B cell (primary cell): ENCODE measurements at regions of chr15 and their contacts with region 1.

Region 1: GRCh38 chr15:67839929-67840748 is at the start of gene RNU6-1:
- DNase-seq: peak; percentile 97
- ATAC-seq: peak; percentile 84
- H3K4me3 ChIP-seq: peak within 1 kb of the TSS; percentile 68 to 97 (median 83)
- H3K4me3 Mint-ChIP-seq: peak within 1 kb of the TSS; percentile 91
- H3K27ac ChIP-seq: peak within 1 kb of the TSS; percentile 95 to 96
- H3K27ac Mint-ChIP-seq: peak within 1 kb of the TSS; percentile 97
- H3K4me1 ChIP-seq: peaks cover 29 to 36% of the 10 kb centered on the region in 2 donors
- H3K4me1 Mint-ChIP-seq: peaks cover 41% of the 10 kb centered on the region
- H3K27me3 ChIP-seq: peaks cover 0 to 30% (median 12%) of the 10 kb centered on the region in 4 experiments
- H3K27me3 Mint-ChIP-seq: peaks cover 15% of the 10 kb centered on the region
- CTCF ChIP-seq: no peak
- total RNA-seq, gene RNU6-1: not detected in 2 replicates

Region 2: GRCh38 chr15:66862878-66863335 is 977.2 kb before region 1 on chr15:
- CTCF ChIA-PET with region 1: no interaction called
- POLR2A ChIA-PET with region 1: no interaction called
- intact Hi-C with region 1: loop called (anchors 5 kb)
- DNase-seq: peak; percentile 91
- ATAC-seq: peak; percentile 61
- H3K4me3 ChIP-seq: no peak overlapping the region
- H3K4me3 Mint-ChIP-seq: no peak overlapping the region
- H3K27ac ChIP-seq: peak overlapping the region; percentile 51 to 61
- H3K27ac Mint-ChIP-seq: peak overlapping the region; percentile 63
- H3K4me1 ChIP-seq: peaks cover 33 to 47% of the 10 kb centered on the region in 2 donors
- H3K4me1 Mint-ChIP-seq: peaks cover 49% of the 10 kb centered on the region
- H3K27me3 ChIP-seq: peaks cover 0 to 3% (median 0%) of the 10 kb centered on the region in 4 experiments
- H3K27me3 Mint-ChIP-seq: no peaks in the 10 kb centered on the region
- CTCF ChIP-seq: peak; percentile 89

Region 3: GRCh38 chr15:67501177-67501835 is 338.8 kb before region 1 on chr15:
- CTCF ChIA-PET with region 1: interaction called, 12 read pairs
- POLR2A ChIA-PET with region 1: no interaction called
- intact Hi-C with region 1: loop called (anchors 5 kb)
- DNase-seq: peak; percentile 36
- ATAC-seq: peak; percentile 41
- H3K4me3 ChIP-seq: no peak overlapping the region
- H3K4me3 Mint-ChIP-seq: no peak overlapping the region
- H3K27ac ChIP-seq: no peak overlapping the region
- H3K27ac Mint-ChIP-seq: no peak overlapping the region
- H3K4me1 ChIP-seq: peaks cover 5 to 9% of the 10 kb centered on the region in 2 donors
- H3K4me1 Mint-ChIP-seq: peaks cover 14% of the 10 kb centered on the region
- H3K27me3 ChIP-seq: no peaks in the 10 kb centered on the region
- H3K27me3 Mint-ChIP-seq: no peaks in the 10 kb centered on the region
- CTCF ChIP-seq: peak; percentile 33

Region 4: DNA sequence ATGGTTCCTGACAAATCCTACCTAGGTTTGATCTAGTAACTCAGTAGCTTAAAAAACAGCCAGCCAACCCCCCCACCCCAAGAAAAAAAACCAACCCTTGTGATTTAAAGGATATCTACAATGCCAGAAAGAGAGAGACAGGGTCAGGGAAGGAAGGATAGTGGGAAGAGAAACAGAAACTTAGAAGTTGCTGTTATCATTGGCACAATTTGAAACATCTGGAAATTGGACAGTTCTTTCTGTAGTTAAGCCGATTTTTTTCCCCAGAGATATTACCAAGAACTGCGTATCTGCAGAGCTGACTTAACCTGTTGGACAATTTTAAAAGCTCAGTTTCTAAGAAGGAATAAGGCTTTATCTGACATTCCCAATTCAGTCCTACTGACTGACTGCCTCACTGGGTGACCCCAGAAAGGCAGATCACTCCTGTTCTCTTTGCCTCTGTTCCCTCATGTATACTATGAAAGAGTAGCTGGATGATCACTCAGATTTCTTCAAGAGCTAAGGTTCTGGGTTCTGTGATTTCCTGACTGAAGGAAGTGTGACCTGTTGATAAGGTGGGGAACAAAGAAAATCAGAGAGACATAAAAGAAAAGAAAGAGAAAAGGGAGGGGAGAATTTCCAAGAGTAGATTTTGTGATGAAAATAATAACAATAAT is 169.4 kb before region 1 on chr15:
- CTCF ChIA-PET with region 1: no interaction called
- POLR2A ChIA-PET with region 1: no interaction called
- intact Hi-C with region 1: no loop called
- DNase-seq: no peak
- ATAC-seq: no peak
- H3K4me3 ChIP-seq: no peak overlapping the region
- H3K4me3 Mint-ChIP-seq: no peak overlapping the region
- H3K27ac ChIP-seq: no peak overlapping the region
- H3K27ac Mint-ChIP-seq: no peak overlapping the region
- H3K4me1 ChIP-seq: no peaks in the 10 kb centered on the region
- H3K4me1 Mint-ChIP-seq: no peaks in the 10 kb centered on the region
- H3K27me3 ChIP-seq: no peaks in the 10 kb centered on the region
- H3K27me3 Mint-ChIP-seq: no peaks in the 10 kb centered on the region
- CTCF ChIP-seq: no peak

Region 5: GRCh38 chr15:67784090-67784781 is 55.9 kb before region 1 on chr15:
- CTCF ChIA-PET with region 1: interaction called, 177 read pairs
- POLR2A ChIA-PET with region 1: interaction called, 22 read pairs
- intact Hi-C with region 1: loop called (anchors 1 kb)
- DNase-seq: peak; percentile 90
- ATAC-seq: peak; percentile 86
- H3K4me3 ChIP-seq: peak overlapping the region in 1 of 5 experiments; percentile 11
- H3K4me3 Mint-ChIP-seq: peak overlapping the region; percentile 66
- H3K27ac ChIP-seq: peak overlapping the region; percentile 75 to 85
- H3K27ac Mint-ChIP-seq: peak overlapping the region; percentile 91
- H3K4me1 ChIP-seq: peaks cover 44 to 50% of the 10 kb centered on the region in 2 donors
- H3K4me1 Mint-ChIP-seq: peaks cover 59% of the 10 kb centered on the region
- H3K27me3 ChIP-seq: no peaks in the 10 kb centered on the region
- H3K27me3 Mint-ChIP-seq: no peaks in the 10 kb centered on the region
- CTCF ChIP-seq: no peak

Region 6: DNA sequence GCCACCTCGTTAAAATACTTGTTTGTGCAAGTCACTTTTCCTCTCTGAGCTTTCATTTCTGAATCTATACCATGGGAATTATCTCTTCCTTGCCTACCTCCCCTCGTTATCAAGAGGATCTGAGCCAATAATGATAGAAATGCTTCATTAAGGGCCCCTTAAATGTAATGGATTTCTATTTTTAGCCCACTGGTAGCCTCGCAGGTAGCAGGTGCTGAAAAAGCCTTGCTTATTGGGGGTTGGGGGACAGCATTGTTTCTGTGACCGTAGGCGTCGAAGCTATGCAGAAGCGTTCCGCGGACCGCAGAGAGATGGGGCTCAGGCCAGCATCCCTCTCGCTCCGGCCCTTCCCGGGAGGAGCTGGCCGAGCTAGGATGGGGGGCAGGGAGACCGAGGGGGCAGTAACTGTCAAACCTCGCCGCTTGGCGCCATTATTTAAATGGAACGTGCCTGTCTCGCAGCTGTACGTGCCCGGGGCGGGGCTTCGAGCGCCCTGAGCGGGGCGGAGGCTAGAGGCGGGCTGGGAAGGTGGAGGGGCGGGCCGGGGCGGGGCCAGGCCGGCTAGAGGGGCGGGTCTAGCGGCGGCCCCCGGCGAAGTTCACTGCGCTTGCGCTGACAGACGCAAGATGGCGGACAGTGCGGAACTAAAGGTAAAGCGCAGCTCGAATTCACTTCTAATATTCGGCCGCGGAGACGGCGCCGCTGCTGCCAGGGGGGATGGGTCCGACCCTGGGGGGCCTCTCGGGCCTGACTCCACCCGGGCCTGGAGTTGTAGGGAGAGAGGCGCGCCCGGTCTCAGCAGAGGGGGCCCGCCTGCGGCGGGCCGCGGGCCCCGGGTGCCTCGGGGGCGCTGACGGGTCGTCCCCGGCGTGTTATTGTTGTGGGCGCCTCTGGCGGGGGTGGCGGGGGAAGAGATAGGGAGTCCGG is 213.8 kb after region 1 on chr15 and contains the start of gene PIAS1:
- CTCF ChIA-PET with region 1: interaction called, 3 read pairs
- POLR2A ChIA-PET with region 1: no interaction called
- intact Hi-C with region 1: loop called (anchors 2 kb)
- DNase-seq: peak; percentile 95
- ATAC-seq: peak; percentile 92
- H3K4me3 ChIP-seq: peak within 1 kb of the TSS; percentile 77 to 99 (median 88)
- H3K4me3 Mint-ChIP-seq: peak within 1 kb of the TSS; percentile 93
- H3K27ac ChIP-seq: peak within 1 kb of the TSS; percentile 78 to 92
- H3K27ac Mint-ChIP-seq: peak within 1 kb of the TSS; percentile 96
- H3K4me1 ChIP-seq: peaks cover 11 to 26% of the 10 kb centered on the region in 2 donors
- H3K4me1 Mint-ChIP-seq: peaks cover 40% of the 10 kb centered on the region
- H3K27me3 ChIP-seq: no peaks in the 10 kb centered on the region
- H3K27me3 Mint-ChIP-seq: no peaks in the 10 kb centered on the region
- CTCF ChIP-seq: no peak
- total RNA-seq, gene PIAS1: 87.3 and 97.5 TPM in 2 replicates